H1 (cell line): ENCODE measurements at regions of chr19 and their contacts with region 1.

Region 1: GRCh38 chr19:44582581-44583265 is 30.6 kb upstream of the IGSF23 start:
- DNase-seq: peak; percentile 50 to 91
- H3K4me3 ChIP-seq: no peak overlapping the region
- H3K27ac ChIP-seq: no peak overlapping the region
- H3K4me1 ChIP-seq: no peaks in the 10 kb centered on the region
- H3K27me3 ChIP-seq: no peaks in the 10 kb centered on the region
- CTCF ChIP-seq: peak; percentile 89 to 98 (median 97)
- EP300 ChIP-seq: no peak
- POLR2A ChIP-seq: no peak
- RAD21 ChIP-seq: peak; percentile 64 to 70

Region 2: DNA sequence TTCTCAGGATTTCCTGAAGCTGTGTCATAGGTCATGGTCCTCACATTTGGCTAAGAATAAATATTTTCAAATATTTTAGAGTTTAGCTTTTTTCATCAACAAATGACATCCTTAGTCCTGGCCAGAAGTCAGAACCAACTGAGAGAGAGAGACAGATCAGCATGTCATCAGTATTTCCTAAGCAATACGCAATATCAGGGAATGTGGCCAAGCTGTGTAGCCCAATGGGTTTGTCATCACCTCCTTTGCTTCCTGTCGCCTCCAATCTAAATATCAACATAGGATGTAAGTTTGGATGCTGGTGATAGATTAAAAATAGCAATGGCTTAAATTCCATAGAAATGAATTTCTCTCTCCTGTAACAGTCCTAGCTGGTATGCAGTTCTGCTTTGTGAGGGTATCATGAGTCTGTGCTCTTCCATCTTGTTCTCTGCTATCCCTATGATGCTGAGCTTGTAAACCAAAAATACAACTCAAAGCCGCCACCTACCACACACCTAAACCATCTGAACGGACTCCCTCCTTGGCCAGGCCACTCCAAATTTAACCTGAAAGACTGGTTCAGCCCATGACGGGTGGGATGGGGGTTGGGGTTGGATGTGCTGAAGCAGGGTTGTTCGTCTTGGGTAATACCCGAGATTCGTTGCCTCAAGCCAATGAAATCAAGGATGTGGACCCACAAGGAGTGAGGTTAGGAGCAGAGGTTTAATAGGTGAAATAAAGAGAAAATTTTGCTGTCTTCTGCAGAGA is 20.7 kb after region 1 on chr19:
- CTCF ChIA-PET with region 1: interaction called, 42 read pairs
- POLR2A ChIA-PET with region 1: no interaction called
- DNase-seq: no peak
- H3K4me3 ChIP-seq: 0 out of 8 replicates have a peak overlapping the region, but pooled peaks of 1 of the 4 experiments have one; percentile 9
- H3K27ac ChIP-seq: no peak overlapping the region
- H3K4me1 ChIP-seq: peaks cover 0 to 8% (median 4%) of the 10 kb centered on the region in 4 experiments; a peak in 5 of 7 replicates
- H3K27me3 ChIP-seq: no peaks in the 10 kb centered on the region
- CTCF ChIP-seq: no peak
- EP300 ChIP-seq: no peak
- POLR2A ChIP-seq: no peak
- RAD21 ChIP-seq: no peak

Region 3: GRCh38 chr19:44635581-44636438 is 53.1 kb after region 1 on chr19:
- CTCF ChIA-PET with region 1: interaction called, 12 read pairs
- POLR2A ChIA-PET with region 1: no interaction called
- DNase-seq: no peak
- H3K4me3 ChIP-seq: no peak overlapping the region
- H3K27ac ChIP-seq: no peak overlapping the region
- H3K4me1 ChIP-seq: peaks cover 0 to 2% (median 0%) of the 10 kb centered on the region in 4 experiments; a peak in 1 of 7 replicates
- H3K27me3 ChIP-seq: no peaks in the 10 kb centered on the region
- CTCF ChIP-seq: no peak
- EP300 ChIP-seq: no peak
- POLR2A ChIP-seq: no peak
- RAD21 ChIP-seq: no peak

Region 4: GRCh38 chr19:44643605-44644401 is 61.1 kb after region 1 on chr19 and contains the start of gene PVR:
- CTCF ChIA-PET with region 1: interaction called, 25 read pairs
- POLR2A ChIA-PET with region 1: no interaction called
- DNase-seq: peak; percentile 29 to 77
- H3K4me3 ChIP-seq: peak within 1 kb of the TSS; percentile 54 to 99 (median 74)
- H3K27ac ChIP-seq: no peak within 1 kb of the TSS; the same call in 1 of the 2 replicates
- H3K4me1 ChIP-seq: peaks cover 0 to 2% (median under 1%) of the 10 kb centered on the region in 4 experiments; a peak in 2 of 7 replicates
- H3K27me3 ChIP-seq: peaks cover 0 to 8% (median 6%) of the 10 kb centered on the region in 4 experiments; a peak in 6 of 7 replicates
- CTCF ChIP-seq: no peak
- EP300 ChIP-seq: no peak
- POLR2A ChIP-seq: peak in 1 of 2 experiments; percentile 20; a peak in 1 of 3 replicates
- RAD21 ChIP-seq: no peak
- total RNA-seq, gene PVR: 13.3 and 14.1 TPM in 2 replicates

Region 5: DNA sequence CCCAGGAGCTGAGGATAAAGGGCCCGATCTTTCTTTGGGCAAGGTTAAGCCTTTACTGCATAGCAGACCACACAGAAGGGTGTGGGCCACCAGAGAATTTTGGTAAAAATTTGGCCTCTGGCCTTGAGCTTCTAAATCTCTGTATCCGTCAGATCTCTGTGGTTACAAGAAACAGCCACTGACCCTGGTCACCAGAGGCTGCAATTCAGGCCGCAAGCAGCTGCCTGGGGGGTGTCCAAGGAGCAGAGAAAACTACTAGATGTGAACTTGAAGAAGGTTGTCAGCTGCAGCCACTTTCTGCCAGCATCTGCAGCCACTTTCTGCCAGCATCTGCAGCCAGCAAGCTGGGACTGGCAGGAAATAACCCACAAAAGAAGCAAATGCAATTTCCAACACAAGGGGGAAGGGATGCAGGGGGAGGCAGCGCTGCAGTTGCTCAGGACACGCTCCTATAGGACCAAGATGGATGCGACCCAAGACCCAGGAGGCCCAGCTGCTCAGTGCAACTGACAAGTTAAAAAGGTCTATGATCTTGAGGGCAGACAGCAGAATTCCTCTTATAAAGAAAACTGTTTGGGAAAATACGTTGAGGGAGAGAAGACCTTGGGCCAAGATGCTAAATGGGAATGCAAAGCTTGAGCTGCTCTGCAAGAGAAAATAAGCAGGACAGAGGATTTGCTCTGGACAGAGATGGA is 80.1 kb after region 1 on chr19:
- CTCF ChIA-PET with region 1: interaction called, 32 read pairs
- POLR2A ChIA-PET with region 1: interaction called, 4 read pairs
- DNase-seq: no peak
- H3K4me3 ChIP-seq: no peak overlapping the region
- H3K27ac ChIP-seq: no peak overlapping the region
- H3K4me1 ChIP-seq: no peaks in the 10 kb centered on the region; a peak in 2 of 7 replicates
- H3K27me3 ChIP-seq: no peaks in the 10 kb centered on the region
- CTCF ChIP-seq: no peak
- EP300 ChIP-seq: no peak
- POLR2A ChIP-seq: no peak
- RAD21 ChIP-seq: no peak